ENCODE measurements at regions of chr21 and their contacts with region 1.

Region 1: GRCh38 chr21:39388038-39388810 is 39.3 kb upstream of the HMGN1 start:
- DNase-seq: peak; percentile 94
- H3K4me3 ChIP-seq: peak overlapping the region; percentile 16 to 51 (median 44)
- H3K27ac ChIP-seq: peak overlapping the region; percentile 72 to 84 (median 80)
- H3K4me1 ChIP-seq: peaks cover 0 to 42% (median 26%) of the 10 kb centered on the region in 4 donors
- H3K27me3 ChIP-seq: no peaks in the 10 kb centered on the region
- CTCF ChIP-seq: peak; percentile 74 to 97 (median 90)
- EP300 ChIP-seq: no peak
- POLR2A ChIP-seq: no peak

Region 2: DNA sequence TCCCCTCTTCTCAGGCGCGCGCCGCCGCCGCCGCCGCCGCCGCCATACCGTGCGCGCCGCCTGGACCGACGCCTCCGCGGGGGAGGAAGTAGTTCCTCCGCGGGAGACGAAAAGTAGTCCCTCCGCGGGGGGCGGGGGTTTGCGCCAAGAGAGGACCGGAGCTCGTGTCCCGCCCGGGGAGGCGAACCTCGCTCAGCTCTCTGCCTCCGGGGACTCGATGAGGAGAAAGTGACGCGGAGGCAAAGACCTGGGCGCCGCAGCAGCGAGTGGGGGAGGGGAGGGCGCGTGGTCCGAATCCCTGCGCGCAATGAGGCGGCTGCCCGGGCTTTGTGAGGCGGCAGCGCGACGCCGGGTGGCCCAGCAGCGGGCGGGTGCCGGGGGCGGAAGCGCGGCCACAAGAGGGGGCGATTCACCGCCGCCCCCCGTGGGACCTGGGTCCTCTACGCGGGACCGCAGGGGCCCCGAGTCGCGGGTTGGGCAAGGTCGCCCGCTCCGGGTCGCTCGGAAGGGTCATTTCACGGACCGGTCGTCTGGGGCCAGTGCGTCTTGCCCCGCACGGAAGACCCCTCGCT is 74.6 kb before region 1 on chr21 and contains the start of gene BRWD1:
- intact Hi-C with region 1: loop called (anchors 1 kb)
- DNase-seq: peak; percentile 93
- H3K4me3 ChIP-seq: peak within 1 kb of the TSS; percentile 73 to 97 (median 82)
- H3K27ac ChIP-seq: peak within 1 kb of the TSS; percentile 96 to 99 (median 96)
- H3K4me1 ChIP-seq: peaks cover 0 to 35% (median 26%) of the 10 kb centered on the region in 4 donors
- H3K27me3 ChIP-seq: no peaks in the 10 kb centered on the region
- CTCF ChIP-seq: peak in 2 of 4 experiments; percentile 33 to 43
- EP300 ChIP-seq: peak in 1 of 4 donors; percentile 81
- POLR2A ChIP-seq: peak; percentile 57 to 68
- total RNA-seq, gene BRWD1: 53.5 to 92.5 (median 70.4) TPM

Region 3: GRCh38 chr21:39445321-39446269 is 57.4 kb after region 1 on chr21 and contains the start of gene LCA5L:
- intact Hi-C with region 1: loop called (anchors 2 kb)
- DNase-seq: peak; percentile 95
- H3K4me3 ChIP-seq: peak within 1 kb of the TSS; percentile 48 to 91 (median 76)
- H3K27ac ChIP-seq: peak within 1 kb of the TSS; percentile 91 to 95 (median 92)
- H3K4me1 ChIP-seq: peaks cover 0 to 16% (median 13%) of the 10 kb centered on the region in 4 donors
- H3K27me3 ChIP-seq: no peaks in the 10 kb centered on the region
- CTCF ChIP-seq: no peak
- EP300 ChIP-seq: no peak
- POLR2A ChIP-seq: peak; percentile 40 to 79
- total RNA-seq, gene LCA5L: 0.82 to 5.5 (median 2.1) TPM